PC-9 (cell line): ENCODE measurements at regions of chr3 and their contacts with region 1.

Region 1: DNA sequence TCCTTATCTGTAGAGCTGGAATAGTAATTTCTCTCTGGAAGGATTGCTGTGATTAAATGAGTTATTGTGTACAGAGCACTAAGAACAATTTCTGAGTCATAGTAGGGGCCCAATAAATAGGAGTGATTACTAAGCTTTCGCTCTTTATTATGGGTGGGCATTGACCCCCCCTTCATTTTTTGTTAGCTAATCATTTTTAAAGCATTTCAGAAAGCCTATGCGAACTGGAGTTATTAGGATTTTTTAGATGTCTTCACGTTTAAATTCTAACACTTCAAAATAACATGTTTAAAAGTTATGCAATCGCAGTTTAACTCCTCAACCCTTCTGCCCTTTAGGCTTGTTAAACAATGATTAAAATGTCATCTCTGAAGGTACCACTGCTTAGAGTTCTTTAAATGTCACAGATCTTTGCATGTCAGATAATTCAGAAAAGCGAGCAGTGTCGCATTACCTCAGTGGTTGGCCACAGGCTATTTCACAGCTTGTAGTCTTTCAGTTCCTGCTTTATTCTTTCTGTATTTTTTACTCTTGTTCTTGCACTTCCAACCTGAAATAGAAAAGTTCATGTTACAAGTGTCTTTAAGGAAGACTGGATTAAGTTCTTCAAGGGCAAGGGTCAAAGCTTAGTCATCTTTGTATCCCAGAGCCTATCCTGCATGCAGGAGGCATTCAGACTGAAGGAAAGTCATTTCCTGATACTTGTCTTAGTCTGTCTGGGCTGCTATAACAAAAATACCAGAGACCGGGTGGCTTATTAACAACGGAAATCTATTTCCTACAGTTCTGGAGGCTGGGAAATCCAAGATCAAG is 102.9 kb downstream of the FNDC3B start:
- DNase-seq: peak in 1 of 2 experiments; percentile 91
- H3K4me3 ChIP-seq: peak overlapping the region; percentile 27; the same call in 1 of the 2 replicates
- H3K27ac ChIP-seq: peak overlapping the region; percentile 86
- H3K4me1 ChIP-seq: peaks cover 67% of the 10 kb centered on the region
- H3K27me3 ChIP-seq: no peaks in the 10 kb centered on the region
- CTCF ChIP-seq: no peak

Region 2: DNA sequence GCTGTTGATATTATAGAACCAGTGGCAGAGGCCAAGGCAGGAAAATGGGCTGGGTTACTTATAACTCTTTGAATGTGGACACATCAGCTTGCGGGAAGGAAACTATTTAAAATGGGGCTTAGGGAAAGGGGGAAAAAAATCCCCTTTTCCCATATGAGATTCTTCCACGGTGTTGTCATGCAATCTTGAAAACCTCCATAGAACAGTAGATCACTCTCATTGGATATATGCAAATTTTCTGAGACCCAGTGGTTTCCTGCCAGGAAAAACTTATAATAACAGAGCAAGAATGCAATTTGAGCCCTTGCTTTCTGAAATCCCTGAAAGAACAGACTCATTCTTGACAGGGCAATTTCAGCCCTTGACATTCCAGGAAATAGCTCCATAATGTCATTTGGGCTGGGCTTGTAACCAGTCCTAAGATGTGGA is 268.0 kb before region 1 on chr3:
- CTCF ChIA-PET with region 1: no interaction called
- POLR2A ChIA-PET with region 1: no interaction called
- intact Hi-C with region 1: loop called (anchors 1 kb)
- DNase-seq: peak; percentile 44 to 49
- H3K4me3 ChIP-seq: no peak overlapping the region
- H3K27ac ChIP-seq: 0 out of 2 replicates have a peak overlapping the region, but pooled peaks have one; percentile 0
- H3K4me1 ChIP-seq: peaks cover 15% of the 10 kb centered on the region; the same call in 1 of the 2 replicates
- H3K27me3 ChIP-seq: no peaks in the 10 kb centered on the region
- CTCF ChIP-seq: no peak

Region 3: GRCh38 chr3:172074586-172074985 is 67.7 kb before region 1 on chr3:
- CTCF ChIA-PET with region 1: no interaction called
- POLR2A ChIA-PET with region 1: no interaction called
- intact Hi-C with region 1: no loop called
- DNase-seq: no peak
- H3K4me3 ChIP-seq: no peak overlapping the region
- H3K27ac ChIP-seq: no peak overlapping the region
- H3K4me1 ChIP-seq: 0 out of 2 replicates have a peak, but pooled peaks cover 9% of the 10 kb centered on the region
- H3K27me3 ChIP-seq: no peaks in the 10 kb centered on the region
- CTCF ChIP-seq: no peak

Region 4: GRCh38 chr3:172096881-172097420 is 45.3 kb before region 1 on chr3:
- CTCF ChIA-PET with region 1: no interaction called
- POLR2A ChIA-PET with region 1: no interaction called
- intact Hi-C with region 1: loop called (anchors 2 kb)
- DNase-seq: peak; percentile 52 to 95
- H3K4me3 ChIP-seq: no peak overlapping the region
- H3K27ac ChIP-seq: peak overlapping the region; percentile 38
- H3K4me1 ChIP-seq: peaks cover 78% of the 10 kb centered on the region
- H3K27me3 ChIP-seq: no peaks in the 10 kb centered on the region
- CTCF ChIP-seq: no peak

Region 5: GRCh38 chr3:172153335-172153861 is 11.1 kb after region 1 on chr3:
- CTCF ChIA-PET with region 1: no interaction called
- POLR2A ChIA-PET with region 1: no interaction called
- intact Hi-C with region 1: loop called (anchors 1 kb)
- DNase-seq: peak; percentile 92 to 99
- H3K4me3 ChIP-seq: peak overlapping the region; percentile 28; the same call in 1 of the 2 replicates
- H3K27ac ChIP-seq: peak overlapping the region; percentile 96
- H3K4me1 ChIP-seq: peaks cover 98% of the 10 kb centered on the region
- H3K27me3 ChIP-seq: no peaks in the 10 kb centered on the region
- CTCF ChIP-seq: no peak

Region 6: DNA sequence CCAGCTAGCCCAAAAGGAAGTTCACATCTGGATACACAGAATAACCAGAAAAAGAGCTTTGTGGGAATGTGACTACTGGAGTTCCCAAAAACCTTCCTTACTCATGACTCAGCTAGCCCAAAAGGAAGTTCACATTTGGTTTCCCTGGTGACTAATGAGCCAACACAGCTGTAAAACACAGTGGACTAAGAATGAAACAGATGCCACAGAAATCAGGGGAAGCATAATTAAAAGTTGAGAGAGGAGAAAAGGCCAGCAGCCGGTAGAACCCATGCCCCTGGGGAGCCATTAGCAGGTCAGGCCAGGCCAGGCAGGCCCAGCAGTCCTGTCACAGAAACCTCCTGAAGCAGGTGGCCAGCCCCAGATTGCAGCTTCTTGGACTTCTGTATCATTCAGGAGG is 175.7 kb after region 1 on chr3:
- CTCF ChIA-PET with region 1: no interaction called
- POLR2A ChIA-PET with region 1: no interaction called
- intact Hi-C with region 1: loop called (anchors 5 kb)
- DNase-seq: peak; percentile 58 to 93
- H3K4me3 ChIP-seq: no peak overlapping the region
- H3K27ac ChIP-seq: peak overlapping the region; percentile 86
- H3K4me1 ChIP-seq: peaks cover 72% of the 10 kb centered on the region
- H3K27me3 ChIP-seq: no peaks in the 10 kb centered on the region
- CTCF ChIP-seq: no peak

Region 7: GRCh38 chr3:172622916-172623700 is 480.9 kb after region 1 on chr3:
- CTCF ChIA-PET with region 1: no interaction called
- POLR2A ChIA-PET with region 1: no interaction called
- intact Hi-C with region 1: no loop called
- DNase-seq: peak; percentile 46 to 87
- H3K4me3 ChIP-seq: peak overlapping the region; percentile 30; the same call in 1 of the 2 replicates
- H3K27ac ChIP-seq: peak overlapping the region; percentile 38; the same call in 1 of the 2 replicates
- H3K4me1 ChIP-seq: peaks cover 37% of the 10 kb centered on the region
- H3K27me3 ChIP-seq: no peaks in the 10 kb centered on the region
- CTCF ChIP-seq: peak; percentile 95